Ascending aorta (tissue), 2 donors: ENCODE measurements at regions of chr1 and their contacts with region 1.

Region 1: GRCh38 chr1:10209905-10210810 is at the start of gene KIF1B:
- DNase-seq: peak; percentile 92 to 99
- H3K4me3 ChIP-seq: peak within 1 kb of the TSS; percentile 93 to 99
- H3K27ac ChIP-seq: peak within 1 kb of the TSS; percentile 99 to 100
- H3K4me1 ChIP-seq: peaks cover 0 to 28% of the 10 kb centered on the region in 2 donors
- H3K27me3 ChIP-seq: no peaks in the 10 kb centered on the region
- CTCF ChIP-seq: peak; percentile 97 to 99 (median 98)
- total RNA-seq, gene KIF1B: 13.4 TPM

Region 2: DNA sequence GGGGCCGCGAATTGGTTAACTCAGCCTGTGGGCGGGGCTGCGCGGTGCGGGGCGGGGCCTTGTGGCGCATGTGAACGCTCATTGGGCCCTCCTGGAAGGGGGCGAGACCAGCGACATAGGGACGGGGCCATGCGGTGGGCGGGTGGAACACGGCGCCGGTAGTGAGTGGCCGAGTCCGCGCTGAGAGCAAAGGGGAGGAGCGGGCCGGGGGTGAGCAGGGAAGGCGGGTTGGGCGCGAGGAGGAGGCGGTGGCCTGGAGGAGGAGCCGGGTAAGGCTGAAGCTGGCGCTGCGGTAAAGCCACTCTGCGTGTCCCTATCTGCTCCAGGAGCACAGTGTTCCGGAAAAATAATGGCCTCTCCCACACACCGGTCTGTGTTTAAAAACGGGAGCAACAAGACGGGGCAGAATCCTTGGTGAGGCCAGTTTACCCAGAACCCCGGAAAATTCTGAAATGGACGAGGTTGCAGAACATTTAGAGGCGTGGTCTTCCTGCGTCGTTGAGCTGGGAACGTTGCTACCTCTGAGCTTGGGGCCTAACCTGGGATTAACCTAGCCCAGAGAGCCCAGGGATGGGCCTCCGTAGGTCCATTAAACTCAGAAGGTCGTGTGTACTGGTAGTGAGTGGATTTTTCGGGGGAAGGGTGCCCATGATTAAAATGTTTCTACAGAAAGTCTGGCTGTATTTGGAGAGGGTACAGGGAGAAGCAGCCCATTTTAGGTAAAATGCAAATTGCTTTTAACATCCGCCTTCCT is 299.6 kb before region 1 on chr1:
- intact Hi-C with region 1: loop called (anchors 2 kb)
- DNase-seq: peak; percentile 99 to 100
- H3K4me3 ChIP-seq: peak overlapping the region; percentile 64 to 65
- H3K27ac ChIP-seq: peak overlapping the region; percentile 80 to 92
- H3K4me1 ChIP-seq: peaks cover 5 to 16% of the 10 kb centered on the region in 2 donors
- H3K27me3 ChIP-seq: no peaks in the 10 kb centered on the region
- CTCF ChIP-seq: no peak

Region 3: DNA sequence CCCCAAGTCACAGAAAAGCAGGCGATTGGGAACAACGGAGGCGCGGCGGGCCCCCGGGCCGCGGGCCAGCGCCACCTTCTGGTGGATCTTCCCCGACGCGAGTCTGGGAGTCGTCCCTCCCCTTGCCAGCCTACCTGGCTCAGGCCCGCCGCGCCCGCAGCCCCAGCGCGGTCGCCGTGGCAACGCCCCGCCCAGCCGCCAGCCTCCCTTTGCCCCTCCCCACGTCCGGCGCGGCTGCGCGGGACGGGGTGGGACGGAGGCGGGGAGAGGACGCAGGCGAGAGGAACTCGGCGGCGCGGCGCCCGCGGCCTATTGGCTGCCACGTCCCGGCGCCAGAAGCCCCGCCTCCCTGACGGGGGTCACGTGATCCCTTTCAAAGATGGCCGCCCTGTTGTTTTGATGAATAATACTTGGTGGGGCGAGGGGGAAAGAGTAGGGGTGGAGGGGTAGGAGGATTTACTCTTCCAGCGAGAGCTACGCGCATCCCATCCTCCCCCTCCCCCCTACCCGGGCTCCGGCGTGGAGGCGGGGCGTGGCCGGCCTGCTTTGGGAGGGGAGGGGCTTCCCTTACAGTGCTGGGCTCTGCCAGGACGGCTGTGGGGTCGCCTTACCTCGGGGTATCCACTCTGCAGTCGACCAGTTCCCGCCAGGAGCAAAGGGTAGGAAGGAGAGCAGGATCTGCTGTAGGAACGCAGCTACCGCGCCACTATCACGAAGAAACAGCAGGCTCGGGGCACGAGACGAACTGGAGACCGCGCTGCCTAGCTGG is 177.4 kb before region 1 on chr1 and contains the start of gene UBE4B:
- intact Hi-C with region 1: loop called (anchors 1 kb)
- DNase-seq: peak; percentile 95 to 99
- H3K4me3 ChIP-seq: peak within 1 kb of the TSS; percentile 77 to 82
- H3K27ac ChIP-seq: peak within 1 kb of the TSS; percentile 86 to 92
- H3K4me1 ChIP-seq: peaks cover 3 to 13% of the 10 kb centered on the region in 2 donors
- H3K27me3 ChIP-seq: no peaks in the 10 kb centered on the region
- CTCF ChIP-seq: peak; percentile 69 to 90 (median 75)
- total RNA-seq, gene UBE4B: 35.2 TPM

Region 4: GRCh38 chr1:10161541-10162290 is 48.4 kb before region 1 on chr1:
- intact Hi-C with region 1: loop called (anchors 5 kb)
- DNase-seq: peak; percentile 29 to 90
- H3K4me3 ChIP-seq: no peak overlapping the region
- H3K27ac ChIP-seq: peak overlapping the region; percentile 80 to 84
- H3K4me1 ChIP-seq: peaks cover 0 to 18% of the 10 kb centered on the region in 2 donors
- H3K27me3 ChIP-seq: no peaks in the 10 kb centered on the region
- CTCF ChIP-seq: no peak

Region 5: DNA sequence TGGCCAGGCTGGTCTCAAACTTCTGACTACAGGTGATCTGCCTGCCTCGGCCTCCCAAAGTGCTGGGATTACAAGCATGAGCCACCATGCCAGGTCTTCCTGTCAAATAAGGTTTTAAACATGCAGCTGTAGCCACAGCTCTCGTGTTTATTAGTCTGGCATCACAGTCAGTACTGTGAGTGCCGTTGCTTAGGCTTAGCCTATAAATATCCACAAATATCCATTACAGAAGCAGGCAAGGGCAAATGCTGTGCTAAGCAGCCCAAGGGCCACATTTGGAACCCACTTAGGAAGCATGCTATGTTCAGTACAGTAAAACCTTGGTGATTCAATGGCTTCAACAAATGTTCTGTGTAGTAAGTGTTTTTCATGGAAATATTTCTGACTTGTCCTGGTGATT is 76.1 kb after region 1 on chr1:
- intact Hi-C with region 1: loop called (anchors 2 kb)
- DNase-seq: peak; percentile 12 to 73
- H3K4me3 ChIP-seq: no peak overlapping the region
- H3K27ac ChIP-seq: peak overlapping the region; percentile 60 to 73
- H3K4me1 ChIP-seq: peaks cover 9 to 23% of the 10 kb centered on the region in 2 donors
- H3K27me3 ChIP-seq: no peaks in the 10 kb centered on the region
- CTCF ChIP-seq: no peak